ENCODE measurements at regions of chr1 and their contacts with region 1.

Region 1: GRCh38 chr1:39410915-39411436 is 80.5 kb upstream of the BMP8A start:
- DNase-seq: no peak
- H3K4me3 ChIP-seq: peak overlapping the region; percentile 79 to 89 (median 81)
- H3K27ac ChIP-seq: peak overlapping the region; percentile 93 to 97 (median 94)
- H3K4me1 ChIP-seq: peaks cover 80 to 93% (median 87%) of the 10 kb centered on the region in 4 donors
- H3K27me3 ChIP-seq: no peaks in the 10 kb centered on the region
- CTCF ChIP-seq: peak; percentile 72 to 83 (median 81)
- EP300 ChIP-seq: no peak
- POLR2A ChIP-seq: no peak

Region 2: GRCh38 chr1:39354572-39354971 is 56.4 kb before region 1 on chr1:
- intact Hi-C with region 1: loop called (anchors 10 kb)
- DNase-seq: no peak
- H3K4me3 ChIP-seq: no peak overlapping the region
- H3K27ac ChIP-seq: peak overlapping the region in 2 of 4 donors; percentile 3 to 28
- H3K4me1 ChIP-seq: peaks cover 5 to 18% (median 16%) of the 10 kb centered on the region in 4 donors
- H3K27me3 ChIP-seq: no peaks in the 10 kb centered on the region
- CTCF ChIP-seq: no peak
- EP300 ChIP-seq: no peak
- POLR2A ChIP-seq: no peak

Region 3: GRCh38 chr1:39378377-39378776 is 32.6 kb before region 1 on chr1:
- intact Hi-C with region 1: loop called (anchors 5 kb)
- DNase-seq: no peak
- H3K4me3 ChIP-seq: no peak overlapping the region
- H3K27ac ChIP-seq: peak overlapping the region in 2 of 4 donors; percentile 27 to 29
- H3K4me1 ChIP-seq: peaks cover 0 to 18% (median 9%) of the 10 kb centered on the region in 4 donors
- H3K27me3 ChIP-seq: no peaks in the 10 kb centered on the region
- CTCF ChIP-seq: peak in 2 of 3 experiments; percentile 29 to 35
- EP300 ChIP-seq: no peak
- POLR2A ChIP-seq: no peak

Measured in esophagus muscularis mucosa (tissue), 4 donors.